Endothelial cell of umbilical vein (primary cell): ENCODE measurements at regions of chr7 and their contacts with region 1.

Region 1: GRCh38 chr7:135745703-135746312 is 2.8 kb downstream of the FAM180A start:
- DNase-seq: peak; percentile 87
- H3K4me3 ChIP-seq: no peak overlapping the region
- H3K27ac ChIP-seq: peak overlapping the region; percentile 60
- H3K4me1 ChIP-seq: peaks cover 11% of the 10 kb centered on the region
- H3K27me3 ChIP-seq: no peaks in the 10 kb centered on the region
- CTCF ChIP-seq: no peak
- POLR2A ChIP-seq: peak; percentile 54

Region 2: DNA sequence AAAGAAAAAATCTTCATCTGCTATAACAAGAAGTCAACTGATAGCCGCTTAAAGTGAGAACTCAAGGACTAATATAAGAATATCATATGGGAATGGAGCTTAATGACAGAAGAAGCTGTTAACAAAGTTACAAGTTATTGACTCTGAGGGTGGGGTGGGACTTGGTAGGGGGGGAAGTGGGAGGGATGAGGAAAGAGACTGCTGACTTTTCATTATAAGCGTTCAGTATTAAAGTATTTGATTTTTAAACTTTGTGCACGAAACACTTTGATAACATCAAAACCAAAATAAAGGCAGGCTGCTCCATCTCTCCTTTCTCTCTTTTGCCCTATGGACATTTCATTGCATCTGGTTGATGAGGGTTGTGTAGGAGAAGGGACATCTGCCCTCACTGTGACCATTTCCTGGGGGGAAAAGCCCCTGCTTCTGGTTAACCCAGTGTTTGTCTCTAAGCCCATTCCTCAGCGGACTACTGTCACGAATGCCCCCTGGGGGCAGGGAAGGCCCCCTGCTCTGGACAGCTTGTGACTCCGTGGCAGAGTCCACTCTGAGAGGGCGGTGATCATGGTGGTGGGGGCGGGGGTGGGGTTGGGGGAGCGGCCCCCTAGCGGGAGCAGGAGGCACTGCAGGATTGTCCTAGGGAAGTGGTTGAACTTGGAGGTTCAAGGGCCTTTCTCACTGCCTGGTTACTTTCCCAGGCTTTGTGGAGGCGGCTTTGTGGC is 35.2 kb before region 1 on chr7:
- CTCF ChIA-PET with region 1: interaction called, 14 read pairs
- POLR2A ChIA-PET with region 1: no interaction called
- dilution Hi-C with region 1: no loop called
- intact Hi-C with region 1: loop called (anchors 5 kb)
- DNase-seq: no peak
- H3K4me3 ChIP-seq: no peak overlapping the region
- H3K27ac ChIP-seq: no peak overlapping the region
- H3K4me1 ChIP-seq: peaks cover 18% of the 10 kb centered on the region
- H3K27me3 ChIP-seq: no peaks in the 10 kb centered on the region
- CTCF ChIP-seq: peak; percentile 31 to 66
- POLR2A ChIP-seq: no peak

Region 3: DNA sequence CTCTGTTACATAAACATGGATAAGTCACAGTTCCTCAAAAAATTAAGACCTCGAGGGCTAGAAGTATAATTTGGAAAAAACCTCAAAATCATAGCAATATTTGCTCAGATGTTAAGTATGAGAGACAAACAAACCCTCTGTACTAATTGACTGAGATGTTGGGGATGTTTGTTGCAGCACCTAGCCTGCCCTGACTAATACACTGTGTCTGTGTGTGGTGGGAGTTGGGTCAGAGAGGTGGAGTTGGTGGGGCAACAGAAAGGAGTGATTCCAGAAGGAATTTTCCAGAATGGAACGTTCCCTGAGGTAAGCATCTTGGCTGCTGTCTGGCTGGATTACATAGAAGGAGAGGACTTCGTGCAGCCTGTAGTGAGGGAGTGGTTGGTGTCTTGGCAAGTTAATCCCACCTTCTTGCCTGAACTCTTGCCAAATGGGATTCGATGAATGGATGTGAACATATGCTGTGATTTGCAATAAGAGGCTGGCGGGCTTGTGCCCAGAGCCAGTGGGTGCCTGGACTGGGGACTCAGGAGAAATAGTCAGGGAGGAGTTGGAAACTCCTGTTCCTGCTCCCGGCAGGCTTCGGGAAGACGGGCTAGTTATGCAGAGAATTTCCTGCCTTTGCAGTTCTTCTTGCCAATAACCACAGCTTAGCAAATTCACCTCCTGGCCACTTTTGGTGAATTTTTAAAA is 12.1 kb after region 1 on chr7:
- CTCF ChIA-PET with region 1: interaction called, 4 read pairs
- POLR2A ChIA-PET with region 1: no interaction called
- dilution Hi-C with region 1: no loop called
- intact Hi-C with region 1: loop called (anchors 1 kb)
- DNase-seq: peak; percentile 71
- H3K4me3 ChIP-seq: peak overlapping the region in 1 of 3 experiments; percentile 61
- H3K27ac ChIP-seq: peak overlapping the region; percentile 60
- H3K4me1 ChIP-seq: peaks cover 27% of the 10 kb centered on the region
- H3K27me3 ChIP-seq: no peaks in the 10 kb centered on the region
- CTCF ChIP-seq: no peak
- POLR2A ChIP-seq: peak; percentile 58